CD8-positive, alpha-beta T cell (primary cell): ENCODE measurements at regions of chr2 and their contacts with region 1.

Region 1: GRCh38 chr2:160493227-160494028 is at the start of gene RBMS1:
- DNase-seq: peak; percentile 8 to 70 (median 53)
- ATAC-seq: peak; percentile 41
- H3K4me3 ChIP-seq: peak within 1 kb of the TSS; percentile 62 to 80
- H3K4me3 Mint-ChIP-seq: peak within 1 kb of the TSS; percentile 95
- H3K27ac ChIP-seq: peak within 1 kb of the TSS; percentile 41 to 51
- H3K27ac Mint-ChIP-seq: peak within 1 kb of the TSS; percentile 93
- H3K4me1 ChIP-seq: peaks cover 35% of the 10 kb centered on the region
- H3K4me1 Mint-ChIP-seq: peaks cover 43% of the 10 kb centered on the region
- H3K27me3 ChIP-seq: no peaks in the 10 kb centered on the region
- H3K27me3 Mint-ChIP-seq: no peaks in the 10 kb centered on the region
- CTCF ChIP-seq: no peak
- total RNA-seq, gene RBMS1: 69.3 to 71.2 TPM

Region 2: GRCh38 chr2:160269803-160270570 is 223.4 kb before region 1 on chr2:
- CTCF ChIA-PET with region 1: no interaction called
- POLR2A ChIA-PET with region 1: no interaction called
- intact Hi-C with region 1: loop called in 1 of 2 experiments (anchors 5 kb)
- DNase-seq: peak; percentile 37 to 85 (median 67)
- ATAC-seq: peak; percentile 88
- H3K4me3 ChIP-seq: peak overlapping the region; percentile 57 to 75
- H3K4me3 Mint-ChIP-seq: peak overlapping the region; percentile 87
- H3K27ac ChIP-seq: peak overlapping the region; percentile 48 to 65
- H3K27ac Mint-ChIP-seq: peak overlapping the region; percentile 94
- H3K4me1 ChIP-seq: peaks cover 17% of the 10 kb centered on the region
- H3K4me1 Mint-ChIP-seq: peaks cover 28% of the 10 kb centered on the region
- H3K27me3 ChIP-seq: no peaks in the 10 kb centered on the region
- H3K27me3 Mint-ChIP-seq: no peaks in the 10 kb centered on the region
- CTCF ChIP-seq: peak; percentile 70

Region 3: DNA sequence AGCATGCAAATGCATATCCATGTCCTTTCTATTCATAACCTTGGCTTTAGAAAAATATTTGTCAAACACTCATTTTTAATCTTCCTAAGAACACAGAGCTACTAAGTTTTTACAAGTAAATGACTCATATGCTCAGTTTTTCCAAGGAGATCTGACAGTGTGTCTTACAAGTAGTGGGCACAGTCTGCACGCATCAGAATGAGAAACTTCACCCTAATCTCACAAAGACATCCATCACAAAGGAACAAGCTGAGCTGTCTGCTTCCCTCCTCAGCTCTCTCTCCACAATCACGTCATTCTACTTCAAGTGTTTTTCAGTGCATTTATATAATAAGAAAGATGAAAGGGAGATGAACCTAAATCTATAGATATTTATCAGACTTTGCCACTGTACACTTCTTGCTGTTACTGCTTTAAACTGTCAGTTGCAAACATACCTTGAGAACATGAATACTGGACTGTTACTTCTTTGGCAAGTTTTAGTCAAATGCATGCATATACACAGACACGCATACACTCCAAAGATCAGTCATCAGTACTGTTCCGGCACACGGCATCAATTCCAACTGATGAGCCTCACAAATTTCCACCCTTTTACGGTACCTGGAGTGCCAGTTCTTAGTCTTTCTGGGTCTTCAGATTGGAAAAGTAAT is 75.6 kb before region 1 on chr2:
- CTCF ChIA-PET with region 1: no interaction called
- POLR2A ChIA-PET with region 1: interaction called, 3 read pairs
- intact Hi-C with region 1: loop called in 1 of 2 experiments (anchors 2 kb)
- DNase-seq: peak in 4 of 9 experiments; percentile 15 to 58 (median 36)
- ATAC-seq: peak; percentile 85
- H3K4me3 ChIP-seq: no peak overlapping the region
- H3K4me3 Mint-ChIP-seq: no peak overlapping the region
- H3K27ac ChIP-seq: no peak overlapping the region
- H3K27ac Mint-ChIP-seq: peak overlapping the region; percentile 24
- H3K4me1 ChIP-seq: peaks cover 26% of the 10 kb centered on the region
- H3K4me1 Mint-ChIP-seq: peaks cover 64% of the 10 kb centered on the region
- H3K27me3 ChIP-seq: no peaks in the 10 kb centered on the region
- H3K27me3 Mint-ChIP-seq: no peaks in the 10 kb centered on the region
- CTCF ChIP-seq: no peak

Region 4: DNA sequence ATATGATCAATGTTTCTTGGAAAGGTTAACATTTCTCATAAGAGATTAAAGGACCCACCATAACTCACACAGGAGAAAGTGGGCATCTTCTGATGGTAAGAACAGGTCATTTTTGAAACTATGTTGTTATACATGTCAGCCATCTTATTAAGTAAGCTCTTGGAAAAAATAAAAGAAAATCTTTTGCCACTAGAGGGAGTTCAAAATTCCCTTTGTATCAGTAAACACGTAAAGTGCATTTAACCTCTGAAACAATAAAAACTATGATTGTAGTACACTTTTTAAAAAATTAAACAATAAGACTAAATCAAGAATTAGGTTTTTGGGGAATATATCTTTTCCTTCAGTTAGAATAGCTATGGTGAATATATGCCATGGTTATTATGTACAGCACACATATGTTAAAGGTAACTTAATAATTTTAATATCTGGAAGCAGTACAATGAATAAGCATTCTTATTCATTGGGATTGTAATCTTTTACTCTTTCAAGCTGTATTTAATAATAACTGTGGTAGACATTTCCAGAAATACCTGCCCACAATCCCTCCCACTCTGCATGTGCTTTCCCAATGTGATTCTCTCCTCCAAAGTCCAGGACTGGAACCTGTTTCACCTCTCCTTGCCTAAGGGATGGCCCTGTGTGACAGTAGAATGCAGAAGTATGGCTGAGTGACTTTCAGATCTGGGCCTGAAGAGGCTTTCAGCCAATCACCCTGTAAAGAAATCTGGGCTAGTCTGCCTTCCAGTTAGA is 64.0 kb before region 1 on chr2:
- CTCF ChIA-PET with region 1: interaction called, 4 read pairs
- POLR2A ChIA-PET with region 1: interaction called, 6 read pairs
- intact Hi-C with region 1: loop called (anchors 1 to 2 kb)
- DNase-seq: peak in 2 of 9 experiments; percentile 72 to 81
- ATAC-seq: peak; percentile 53
- H3K4me3 ChIP-seq: no peak overlapping the region
- H3K4me3 Mint-ChIP-seq: peak overlapping the region; percentile 26
- H3K27ac ChIP-seq: peak overlapping the region in 1 of 2 experiments; percentile 77
- H3K27ac Mint-ChIP-seq: peak overlapping the region; percentile 92
- H3K4me1 ChIP-seq: peaks cover 42% of the 10 kb centered on the region
- H3K4me1 Mint-ChIP-seq: peaks cover 71% of the 10 kb centered on the region
- H3K27me3 ChIP-seq: no peaks in the 10 kb centered on the region
- H3K27me3 Mint-ChIP-seq: no peaks in the 10 kb centered on the region
- CTCF ChIP-seq: peak; percentile 84

Region 5: DNA sequence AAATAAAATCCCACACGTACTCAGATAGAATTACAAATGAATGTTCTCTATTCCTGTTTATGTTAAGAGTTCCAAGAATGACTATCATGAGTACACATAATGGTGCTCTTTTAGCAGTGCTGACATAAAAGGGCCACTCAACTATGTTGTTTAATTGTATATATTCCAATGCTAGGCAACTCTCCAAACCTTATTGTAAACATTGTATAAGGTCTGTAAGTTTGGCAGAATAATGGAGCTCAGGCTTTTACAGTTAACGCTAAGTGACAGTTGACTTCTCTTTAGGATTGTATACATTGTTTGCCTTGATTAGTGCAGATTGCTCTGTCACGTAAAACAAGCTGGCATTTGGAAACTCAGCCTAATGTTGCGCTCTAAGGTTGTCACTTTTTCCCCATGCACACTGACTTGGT is 20.6 kb before region 1 on chr2:
- CTCF ChIA-PET with region 1: no interaction called
- POLR2A ChIA-PET with region 1: interaction called, 4 read pairs
- intact Hi-C with region 1: loop called in 1 of 2 experiments (anchors 2 kb)
- DNase-seq: no peak
- ATAC-seq: no peak
- H3K4me3 ChIP-seq: no peak overlapping the region
- H3K4me3 Mint-ChIP-seq: no peak overlapping the region
- H3K27ac ChIP-seq: no peak overlapping the region
- H3K27ac Mint-ChIP-seq: no peak overlapping the region
- H3K4me1 ChIP-seq: peaks cover 31% of the 10 kb centered on the region
- H3K4me1 Mint-ChIP-seq: peaks cover 66% of the 10 kb centered on the region
- H3K27me3 ChIP-seq: no peaks in the 10 kb centered on the region
- H3K27me3 Mint-ChIP-seq: no peaks in the 10 kb centered on the region
- CTCF ChIP-seq: no peak

Region 6: DNA sequence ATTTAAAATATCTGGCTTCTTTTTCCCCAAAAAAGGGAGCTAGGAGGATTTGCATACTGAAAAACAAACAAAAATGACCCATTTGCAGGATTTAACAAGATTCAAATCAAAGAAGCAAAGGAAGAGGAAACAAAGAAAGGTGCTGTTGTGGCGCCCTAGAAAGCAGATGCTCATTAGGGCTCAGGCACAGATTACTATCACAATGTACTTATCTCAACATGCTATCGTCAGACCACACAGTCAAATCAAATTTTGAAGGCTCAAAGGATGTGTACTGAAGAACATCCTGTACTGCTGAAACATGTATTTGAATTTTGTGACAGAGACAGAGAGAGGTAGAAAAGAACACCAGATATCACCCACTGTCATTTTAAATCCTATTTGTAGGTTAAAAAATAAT is 10.8 kb before region 1 on chr2:
- CTCF ChIA-PET with region 1: interaction called, 3 read pairs
- POLR2A ChIA-PET with region 1: no interaction called
- intact Hi-C with region 1: loop called in 1 of 2 experiments (anchors 1 kb)
- DNase-seq: peak in 3 of 9 experiments; percentile 43 to 80 (median 67)
- ATAC-seq: peak; percentile 92
- H3K4me3 ChIP-seq: no peak overlapping the region
- H3K4me3 Mint-ChIP-seq: peak overlapping the region; percentile 49
- H3K27ac ChIP-seq: peak overlapping the region; percentile 39 to 42
- H3K27ac Mint-ChIP-seq: peak overlapping the region; percentile 87
- H3K4me1 ChIP-seq: peaks cover 61% of the 10 kb centered on the region
- H3K4me1 Mint-ChIP-seq: peaks cover 72% of the 10 kb centered on the region
- H3K27me3 ChIP-seq: no peaks in the 10 kb centered on the region
- H3K27me3 Mint-ChIP-seq: no peaks in the 10 kb centered on the region
- CTCF ChIP-seq: no peak

Region 7: DNA sequence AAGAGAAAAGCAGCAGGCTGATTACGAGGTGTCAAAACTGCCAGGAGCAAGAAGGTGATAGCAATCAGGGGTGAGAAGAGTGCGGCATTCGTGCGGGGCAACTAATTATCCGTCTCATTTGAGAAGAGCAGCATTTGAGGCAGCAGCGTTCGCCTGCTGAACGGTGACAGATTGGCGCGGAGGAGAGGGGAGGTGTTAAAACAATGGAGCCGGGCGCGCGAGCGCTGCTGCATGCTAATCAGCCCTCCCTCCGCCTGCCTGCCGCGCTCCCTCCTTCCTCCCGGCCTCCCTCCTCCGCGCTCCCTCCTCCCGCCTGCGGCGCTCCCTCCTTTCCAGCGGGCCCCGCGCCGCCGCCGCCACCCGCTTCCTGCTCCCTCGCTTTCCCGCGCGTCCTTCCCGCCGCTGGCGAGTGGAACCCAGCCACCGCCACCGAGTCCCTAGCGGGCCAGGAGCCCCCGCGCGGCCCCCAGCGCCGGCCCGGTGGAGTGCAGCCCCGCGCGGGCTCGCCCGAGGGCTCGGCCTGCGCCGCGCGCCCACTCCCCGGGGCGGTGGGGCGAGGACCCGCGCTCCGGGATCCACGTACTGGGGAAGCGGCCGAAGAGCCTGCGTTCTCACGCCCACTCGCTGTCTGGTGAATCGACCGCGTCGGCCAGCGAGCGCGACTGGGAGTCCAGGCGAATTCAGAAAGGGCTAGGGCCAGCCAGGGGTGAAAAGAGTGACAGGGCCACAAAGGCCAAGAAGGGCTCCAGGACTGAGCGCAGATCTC is 745.3 kb after region 1 on chr2:
- CTCF ChIA-PET with region 1: no interaction called
- POLR2A ChIA-PET with region 1: no interaction called
- intact Hi-C with region 1: loop called in 1 of 2 experiments (anchors 5 kb)
- DNase-seq: peak; percentile 18 to 74 (median 68)
- ATAC-seq: peak; percentile 71
- H3K4me3 ChIP-seq: peak overlapping the region; percentile 56 to 64
- H3K4me3 Mint-ChIP-seq: peak overlapping the region; percentile 92
- H3K27ac ChIP-seq: no peak overlapping the region
- H3K27ac Mint-ChIP-seq: peak overlapping the region; percentile 78
- H3K4me1 ChIP-seq: peaks cover 16% of the 10 kb centered on the region
- H3K4me1 Mint-ChIP-seq: peaks cover 49% of the 10 kb centered on the region
- H3K27me3 ChIP-seq: peaks cover 0 to 4% of the 10 kb centered on the region in 2 experiments
- H3K27me3 Mint-ChIP-seq: peaks cover 2% of the 10 kb centered on the region
- CTCF ChIP-seq: no peak